Dorsolateral prefrontal cortex (tissue), 120 donors: ENCODE measurements at regions of chr2 and their contacts with region 1.

Region 1: GRCh38 chr2:120174963-120175581 is 48.1 kb downstream of the TMEM185B start:
- DNase-seq: peak in 1 of 10 donors; percentile 24
- H3K4me3 ChIP-seq: peak overlapping the region in 1 of 59 donors; percentile 26
- H3K27ac ChIP-seq: peak overlapping the region in 1 of 59 donors; percentile 10
- H3K27me3 ChIP-seq: no peaks in the 10 kb centered on the region
- CTCF ChIP-seq: peak; percentile 64 to 94 (median 82)

Region 2: DNA sequence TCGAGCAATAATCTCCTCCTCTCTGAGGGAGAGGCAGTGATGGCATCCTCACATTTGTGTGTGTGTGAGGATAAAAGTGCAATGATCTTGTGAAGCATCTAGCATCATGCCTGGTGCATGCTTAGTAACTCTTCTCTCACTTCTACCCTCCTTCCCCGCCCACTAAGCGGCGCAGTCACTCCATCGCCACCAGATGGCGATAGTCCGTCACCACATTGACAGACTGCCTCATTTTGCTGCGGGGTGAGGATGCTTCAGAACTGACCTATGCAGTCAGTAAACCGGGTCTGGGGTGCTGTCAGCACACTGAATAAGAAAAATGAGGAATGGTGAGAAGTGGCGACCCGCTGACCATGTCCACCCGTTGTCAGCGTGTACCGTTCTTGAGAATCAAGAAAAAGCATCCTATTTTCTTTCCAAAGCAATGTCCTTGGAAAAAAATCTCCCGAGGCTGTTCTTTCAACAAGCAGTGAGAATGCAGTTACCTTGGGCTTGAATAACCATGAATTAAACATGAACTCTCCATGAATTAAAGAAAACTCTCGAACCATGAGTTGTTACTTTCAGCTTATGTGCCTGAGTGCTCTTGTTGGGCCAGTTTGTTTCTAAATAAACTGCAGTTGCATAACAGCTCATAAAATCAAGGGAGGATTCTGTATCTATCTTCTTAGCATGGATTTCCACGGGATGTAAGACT is 533.4 kb before region 1 on chr2:
- intact Hi-C with region 1: loop called in 1 of 2 experiments (anchors 5 kb)
- DNase-seq: peak; percentile 60 to 87 (median 82)
- H3K4me3 ChIP-seq: peak overlapping the region in 41 of 59 donors; percentile 6 to 42 (median 33)
- H3K27ac ChIP-seq: peak overlapping the region in 43 of 59 donors; percentile 1 to 80 (median 52)
- H3K27me3 ChIP-seq: no peaks in the 10 kb centered on the region
- CTCF ChIP-seq: peak; percentile 60 to 99 (median 96)

Region 3: DNA sequence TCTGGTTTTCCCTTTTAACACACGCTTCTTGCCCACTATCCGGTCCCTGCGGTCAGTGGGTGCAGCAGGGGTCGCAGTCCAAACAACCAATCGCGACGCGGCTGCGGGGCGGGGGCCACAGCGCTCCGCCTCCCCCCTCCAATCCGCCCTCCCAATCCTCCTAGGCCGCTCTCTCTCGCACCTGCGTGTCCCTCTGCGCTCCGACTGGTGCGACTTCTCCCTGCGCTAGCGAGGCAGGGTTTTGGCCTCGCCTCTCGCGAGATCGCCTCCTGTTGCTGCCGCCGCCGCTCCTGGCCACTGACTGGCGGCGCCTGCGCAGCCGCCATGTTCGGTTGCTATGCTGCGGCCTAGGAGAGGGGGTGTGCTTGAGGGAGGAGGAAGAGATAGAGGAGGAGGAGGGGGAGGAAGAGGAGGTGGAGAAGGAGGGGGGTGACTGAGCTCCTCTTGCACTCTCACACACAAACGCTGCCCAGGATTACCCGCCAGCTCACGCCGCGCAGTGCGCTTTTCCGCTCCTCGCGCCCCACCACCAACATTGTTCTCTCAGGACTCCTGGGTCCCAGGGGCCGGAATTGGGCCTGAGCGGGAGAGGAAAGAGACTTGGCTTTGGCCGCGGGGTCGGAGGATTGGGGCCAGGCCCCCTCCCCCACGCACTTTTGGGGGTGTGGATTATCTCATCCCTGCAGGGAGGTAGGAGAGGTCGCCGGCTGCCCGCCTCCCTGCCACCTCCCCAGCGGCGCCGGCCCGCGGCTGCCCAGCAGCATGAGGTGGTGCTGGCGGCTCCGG is 415.4 kb before region 1 on chr2 and contains the start of gene PTPN4:
- intact Hi-C with region 1: loop called in 1 of 2 experiments (anchors 5 kb)
- DNase-seq: peak; percentile 73 to 95 (median 91)
- H3K4me3 ChIP-seq: peak within 1 kb of the TSS; percentile 72 to 98 (median 87)
- H3K27ac ChIP-seq: peak within 1 kb of the TSS; percentile 84 to 99 (median 96)
- H3K27me3 ChIP-seq: no peaks in the 10 kb centered on the region
- CTCF ChIP-seq: peak in 30 of 56 donors; percentile 6 to 54 (median 30)
- total RNA-seq, gene PTPN4: 78.4 to 183 (median 137) TPM

Region 4: DNA sequence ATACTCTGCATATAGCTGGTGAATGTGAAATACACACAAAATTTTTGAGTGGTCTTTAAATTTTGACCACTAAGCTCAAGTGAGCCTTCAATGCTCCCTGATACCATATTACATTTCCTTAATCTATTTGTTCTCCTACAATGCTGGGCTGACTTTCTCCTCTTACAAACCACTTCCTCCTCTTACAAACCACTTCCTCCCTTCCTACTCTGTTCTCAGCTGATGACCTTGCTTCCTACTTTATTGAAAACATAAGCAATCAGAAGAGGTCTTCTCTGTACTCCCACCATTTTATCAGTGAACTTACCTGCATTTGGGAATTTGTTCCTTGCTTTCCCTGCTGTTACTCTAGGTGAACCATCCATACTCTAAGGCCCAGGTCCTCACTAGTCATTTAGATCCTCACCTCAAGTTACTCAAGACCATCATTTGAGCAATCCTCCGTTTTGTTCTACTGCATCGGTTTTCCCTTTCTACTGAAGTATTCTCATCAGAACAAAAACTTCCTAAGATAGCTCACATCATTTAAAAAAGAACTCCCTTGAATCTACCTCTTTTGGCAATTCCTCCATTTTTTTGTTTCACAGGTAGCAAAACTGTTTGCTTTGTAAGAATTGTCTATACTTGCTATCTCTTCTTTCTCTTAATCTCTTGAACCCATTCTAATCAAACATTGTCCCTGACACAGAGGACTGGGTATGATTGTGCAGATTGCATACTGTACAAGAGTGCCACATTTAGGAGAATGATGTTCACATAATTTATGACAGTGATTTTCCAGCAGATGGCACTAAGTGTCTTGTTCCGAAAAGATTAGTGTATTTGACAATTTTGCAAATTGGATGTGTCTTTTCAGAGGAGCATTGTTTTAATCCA is 65.6 kb before region 1 on chr2:
- intact Hi-C with region 1: loop called (anchors 2 to 5 kb)
- DNase-seq: no peak
- H3K4me3 ChIP-seq: no peak overlapping the region
- H3K27ac ChIP-seq: peak overlapping the region in 1 of 59 donors; percentile 22
- H3K27me3 ChIP-seq: no peaks in the 10 kb centered on the region
- CTCF ChIP-seq: peak; percentile 30 to 82 (median 62)

Region 5: DNA sequence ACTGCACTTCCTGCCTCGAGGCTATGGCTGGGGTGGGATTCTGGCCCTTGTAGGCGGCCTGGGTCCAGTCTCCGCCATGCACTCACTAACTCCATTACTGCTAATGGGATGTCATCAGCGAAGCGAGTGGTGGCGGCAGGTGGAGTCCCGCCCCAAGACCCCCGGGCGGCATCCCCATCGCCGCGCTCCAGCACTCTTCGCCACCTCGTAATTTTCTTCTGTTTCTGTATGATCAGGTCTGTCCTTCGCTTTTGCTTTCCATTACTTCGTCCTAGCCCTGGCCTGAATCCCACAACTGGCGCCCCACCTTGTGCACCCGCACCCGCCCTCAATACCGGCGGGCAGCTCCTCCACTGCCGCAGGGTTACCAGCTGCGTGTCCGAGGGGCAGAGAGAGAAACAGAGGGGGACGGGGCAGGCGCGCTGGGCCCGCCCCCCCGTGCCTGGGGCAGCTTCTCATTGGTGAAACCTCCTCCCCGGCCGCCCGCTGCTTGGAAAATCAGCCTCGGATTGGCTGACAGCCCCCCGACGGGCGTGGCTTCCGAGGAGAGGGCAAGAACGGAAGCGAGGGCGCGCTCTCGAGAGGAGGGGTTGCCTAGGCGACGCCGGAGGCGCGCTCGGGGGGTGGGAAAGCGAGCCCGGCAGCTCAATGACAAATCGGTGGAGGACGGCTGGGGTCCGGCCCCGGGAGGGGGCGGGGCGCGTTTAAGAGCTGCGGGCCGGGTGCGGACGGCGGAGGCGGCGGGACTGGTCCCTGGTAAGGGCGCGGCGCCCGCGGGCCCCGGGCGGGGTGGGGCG is 77.4 kb after region 1 on chr2 and contains the start of gene RALB:
- intact Hi-C with region 1: loop called in 1 of 2 experiments (anchors 2 kb)
- DNase-seq: peak; percentile 99 to 100 (median 100)
- H3K4me3 ChIP-seq: peak within 1 kb of the TSS; percentile 60 to 98 (median 82)
- H3K27ac ChIP-seq: peak within 1 kb of the TSS in 58 of 59 donors; percentile 17 to 95 (median 82)
- H3K27me3 ChIP-seq: no peaks in the 10 kb centered on the region
- CTCF ChIP-seq: peak in 7 of 56 donors; percentile 2 to 54 (median 8)
- total RNA-seq, gene RALB: 29.9 to 98.4 (median 61.4) TPM